Activated B cell treated with CpG ODN at 0.5 μM for 24 hours (primary cell): ENCODE measurements at regions of chr3 and their contacts with region 1.

Region 1: DNA sequence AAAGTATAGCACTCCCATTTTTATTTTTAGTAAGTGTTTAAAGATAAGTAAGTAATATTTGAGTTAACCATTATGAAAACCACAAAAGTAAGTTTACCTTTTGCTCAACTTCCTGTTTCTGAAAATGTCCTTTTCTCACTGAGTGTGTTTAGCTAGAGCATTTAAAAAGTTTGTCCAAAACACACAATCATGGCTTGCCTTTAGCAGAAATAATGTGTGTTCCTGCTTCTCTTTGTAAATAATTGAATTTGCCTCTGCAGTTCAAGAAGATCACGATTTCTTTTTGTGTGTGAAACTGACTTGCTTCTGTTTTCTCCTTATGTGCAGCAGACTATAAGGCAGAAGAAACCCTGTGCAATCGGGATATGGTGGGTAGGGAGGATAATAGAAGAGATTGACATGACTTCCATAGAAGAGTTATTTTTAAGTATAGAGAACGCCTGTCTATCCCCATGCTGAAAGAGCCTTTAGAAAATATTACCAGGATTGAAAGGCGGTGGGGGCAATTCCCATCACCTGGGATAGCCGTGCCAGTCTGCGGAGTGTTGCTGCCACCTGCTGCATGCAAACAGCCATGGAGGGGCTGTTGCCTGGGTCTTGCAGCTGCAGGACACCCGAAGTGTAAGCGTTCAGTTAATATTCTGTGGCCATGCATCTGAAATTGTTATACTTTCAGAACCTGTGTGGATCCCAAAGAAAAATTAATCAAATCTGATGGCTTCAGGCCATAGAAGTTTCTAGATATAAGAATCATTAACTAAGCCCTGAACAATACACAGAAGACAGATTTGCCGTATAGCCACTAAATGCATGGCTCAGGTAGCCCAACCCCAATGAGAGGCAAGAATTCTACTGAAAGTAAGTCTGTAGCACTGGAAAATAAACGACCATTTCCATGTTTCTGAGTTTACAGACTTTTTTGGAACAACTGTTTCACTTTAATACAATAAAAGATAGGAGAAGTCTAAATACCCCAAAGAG is 2.4 kb upstream of the CD96 start:
- DNase-seq: peak; percentile 32
- ATAC-seq: peak; percentile 76
- H3K4me3 Mint-ChIP-seq: peak overlapping the region; percentile 71
- H3K27ac Mint-ChIP-seq: peak overlapping the region; percentile 66
- H3K4me1 Mint-ChIP-seq: peaks cover 57% of the 10 kb centered on the region
- H3K27me3 Mint-ChIP-seq: no peaks in the 10 kb centered on the region
- CTCF ChIP-seq: no peak

Region 2: DNA sequence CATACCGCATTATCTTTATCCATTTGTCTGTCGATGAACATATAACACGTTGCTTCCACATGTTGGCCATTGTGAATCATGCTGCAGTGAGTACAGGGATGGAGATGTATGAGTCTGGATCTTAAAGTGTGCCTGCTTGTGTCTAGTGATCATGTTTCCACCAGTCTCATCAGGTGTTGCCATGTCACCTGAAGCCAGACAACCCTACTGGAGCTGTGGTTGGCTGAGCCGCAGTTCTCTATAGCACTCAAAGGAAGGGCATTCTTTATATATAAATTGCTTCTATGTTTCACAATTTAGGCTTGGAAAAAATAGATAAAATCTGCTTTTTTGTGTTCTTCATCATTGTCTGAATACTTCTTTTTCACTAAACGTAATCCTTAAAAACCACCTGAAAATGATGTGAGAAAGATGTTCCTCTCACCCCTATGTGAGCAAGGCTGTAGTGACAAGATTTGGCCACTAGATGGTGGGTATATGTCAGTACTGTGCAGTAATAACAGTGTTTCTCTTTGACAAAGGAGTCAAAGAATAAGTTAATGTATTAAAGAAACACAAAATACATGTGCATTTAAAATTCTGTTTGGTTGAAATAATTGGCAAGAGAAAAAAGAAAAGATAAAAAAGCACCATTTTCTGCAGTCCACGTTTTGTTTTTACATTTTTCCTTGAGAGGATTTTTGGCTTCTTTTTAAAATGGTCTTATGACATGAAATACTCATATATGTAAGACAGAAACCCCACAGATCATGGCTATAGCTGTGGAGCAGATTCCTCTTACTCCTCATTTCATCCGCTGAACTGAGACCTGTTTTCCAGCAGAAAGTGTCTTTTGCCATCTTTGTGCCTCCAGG is 1807.8 kb before region 1 on chr3:
- CTCF ChIA-PET with region 1: no interaction called
- POLR2A ChIA-PET with region 1: no interaction called
- intact Hi-C with region 1: loop called (anchors 1 kb)
- DNase-seq: no peak
- ATAC-seq: peak; percentile 62
- H3K4me3 Mint-ChIP-seq: no peak overlapping the region
- H3K27ac Mint-ChIP-seq: no peak overlapping the region
- H3K4me1 Mint-ChIP-seq: no peaks in the 10 kb centered on the region
- H3K27me3 Mint-ChIP-seq: no peaks in the 10 kb centered on the region
- CTCF ChIP-seq: no peak

Region 3: GRCh38 chr3:110736332-110736731 is 803.3 kb before region 1 on chr3:
- CTCF ChIA-PET with region 1: no interaction called
- POLR2A ChIA-PET with region 1: no interaction called
- intact Hi-C with region 1: loop called (anchors 5 kb)
- DNase-seq: no peak
- ATAC-seq: peak; percentile 73
- H3K4me3 Mint-ChIP-seq: no peak overlapping the region
- H3K27ac Mint-ChIP-seq: no peak overlapping the region
- H3K4me1 Mint-ChIP-seq: peaks cover 14% of the 10 kb centered on the region
- H3K27me3 Mint-ChIP-seq: peaks cover 13% of the 10 kb centered on the region
- CTCF ChIP-seq: no peak

Region 4: GRCh38 chr3:111071257-111072015 is 468.2 kb before region 1 on chr3 and contains the start of gene NECTIN3:
- CTCF ChIA-PET with region 1: interaction called, 4 read pairs
- POLR2A ChIA-PET with region 1: no interaction called
- intact Hi-C with region 1: loop called (anchors 2 kb)
- DNase-seq: peak; percentile 53
- ATAC-seq: peak; percentile 92
- H3K4me3 Mint-ChIP-seq: peak within 1 kb of the TSS; percentile 90
- H3K27ac Mint-ChIP-seq: no peak within 1 kb of the TSS
- H3K4me1 Mint-ChIP-seq: peaks cover 29% of the 10 kb centered on the region
- H3K27me3 Mint-ChIP-seq: peaks cover 46% of the 10 kb centered on the region
- CTCF ChIP-seq: no peak
- total RNA-seq, gene NECTIN3: 0.71 and 0.78 TPM in 2 replicates

Region 5: GRCh38 chr3:111521891-111522290 is 17.8 kb before region 1 on chr3:
- CTCF ChIA-PET with region 1: interaction called, 5 read pairs
- POLR2A ChIA-PET with region 1: interaction called, 3 read pairs
- intact Hi-C with region 1: loop called (anchors 1 kb)
- DNase-seq: no peak
- ATAC-seq: no peak
- H3K4me3 Mint-ChIP-seq: no peak overlapping the region
- H3K27ac Mint-ChIP-seq: no peak overlapping the region
- H3K4me1 Mint-ChIP-seq: peaks cover 15% of the 10 kb centered on the region
- H3K27me3 Mint-ChIP-seq: peaks cover 1% of the 10 kb centered on the region
- CTCF ChIP-seq: no peak

Region 6: GRCh38 chr3:111616417-111617105 is 76.9 kb after region 1 on chr3:
- CTCF ChIA-PET with region 1: interaction called, 16 read pairs
- POLR2A ChIA-PET with region 1: interaction called, 4 read pairs
- intact Hi-C with region 1: loop called (anchors 1 kb)
- DNase-seq: no peak
- ATAC-seq: peak; percentile 89
- H3K4me3 Mint-ChIP-seq: no peak overlapping the region
- H3K27ac Mint-ChIP-seq: peak overlapping the region; percentile 89
- H3K4me1 Mint-ChIP-seq: peaks cover 21% of the 10 kb centered on the region
- H3K27me3 Mint-ChIP-seq: no peaks in the 10 kb centered on the region
- CTCF ChIP-seq: no peak

Region 7: DNA sequence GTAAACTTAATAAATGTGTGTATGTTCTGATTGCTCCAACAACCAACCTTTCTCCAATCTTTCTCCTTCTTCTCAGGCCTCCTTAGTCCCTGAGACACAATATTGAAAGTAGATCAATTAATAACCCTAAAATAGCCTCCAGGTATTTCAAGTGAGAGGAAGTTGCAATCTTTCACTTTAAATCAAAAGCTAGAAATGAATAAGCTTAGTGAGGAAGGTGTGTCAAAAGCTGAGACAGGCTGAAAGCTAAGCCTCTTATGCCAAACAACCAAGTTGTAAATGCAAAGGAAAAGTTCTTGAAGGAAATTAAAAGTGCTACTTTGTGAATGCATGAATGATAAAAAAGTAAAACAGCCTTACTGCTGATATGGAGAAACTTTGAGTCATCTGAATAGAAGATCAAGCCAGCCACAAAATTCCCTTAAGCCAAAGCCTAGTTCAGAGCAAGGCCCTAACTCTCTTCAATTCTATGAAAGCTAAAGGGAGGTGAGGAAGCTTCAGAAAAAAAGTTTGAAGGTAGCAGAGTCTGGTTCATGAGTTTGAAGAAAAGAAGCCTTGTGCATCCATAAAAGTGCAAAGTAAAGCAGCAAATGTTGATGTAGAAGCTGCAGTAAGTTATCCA is 1062.7 kb after region 1 on chr3:
- CTCF ChIA-PET with region 1: no interaction called
- POLR2A ChIA-PET with region 1: no interaction called
- intact Hi-C with region 1: no loop called
- DNase-seq: no peak
- ATAC-seq: no peak
- H3K4me3 Mint-ChIP-seq: no peak overlapping the region
- H3K27ac Mint-ChIP-seq: no peak overlapping the region
- H3K4me1 Mint-ChIP-seq: peaks cover 7% of the 10 kb centered on the region
- H3K27me3 Mint-ChIP-seq: peaks cover 2% of the 10 kb centered on the region
- CTCF ChIP-seq: no peak